H1 (cell line): ENCODE measurements at regions of chr6 and their contacts with region 1.

Region 1: GRCh38 chr6:31079656-31080261 is 32.6 kb downstream of the C6orf15 start:
- DNase-seq: peak; percentile 29 to 84
- H3K4me3 ChIP-seq: no peak overlapping the region
- H3K27ac ChIP-seq: no peak overlapping the region
- H3K4me1 ChIP-seq: peaks cover 0 to 4% (median 3%) of the 10 kb centered on the region in 4 experiments; a peak in 6 of 7 replicates
- H3K27me3 ChIP-seq: no peaks in the 10 kb centered on the region
- CTCF ChIP-seq: peak; percentile 27 to 83 (median 76)
- EP300 ChIP-seq: peak in 1 of 2 experiments; percentile 28; a peak in 1 of 3 replicates
- POLR2A ChIP-seq: no peak
- RAD21 ChIP-seq: peak; percentile 79 to 88

Region 2: GRCh38 chr6:30828027-30828960 is 251.5 kb before region 1 on chr6:
- CTCF ChIA-PET with region 1: interaction called, 18 read pairs
- POLR2A ChIA-PET with region 1: no interaction called
- DNase-seq: peak in 1 of 2 experiments; percentile 93
- H3K4me3 ChIP-seq: no peak overlapping the region
- H3K27ac ChIP-seq: no peak overlapping the region
- H3K4me1 ChIP-seq: peaks cover 0 to 11% (median 3%) of the 10 kb centered on the region in 4 experiments; a peak in 4 of 7 replicates
- H3K27me3 ChIP-seq: no peaks in the 10 kb centered on the region
- CTCF ChIP-seq: peak; percentile 92 to 95 (median 94)
- EP300 ChIP-seq: no peak
- POLR2A ChIP-seq: peak in 1 of 2 experiments; percentile 34; a peak in 1 of 3 replicates
- RAD21 ChIP-seq: peak; percentile 97

Region 3: DNA sequence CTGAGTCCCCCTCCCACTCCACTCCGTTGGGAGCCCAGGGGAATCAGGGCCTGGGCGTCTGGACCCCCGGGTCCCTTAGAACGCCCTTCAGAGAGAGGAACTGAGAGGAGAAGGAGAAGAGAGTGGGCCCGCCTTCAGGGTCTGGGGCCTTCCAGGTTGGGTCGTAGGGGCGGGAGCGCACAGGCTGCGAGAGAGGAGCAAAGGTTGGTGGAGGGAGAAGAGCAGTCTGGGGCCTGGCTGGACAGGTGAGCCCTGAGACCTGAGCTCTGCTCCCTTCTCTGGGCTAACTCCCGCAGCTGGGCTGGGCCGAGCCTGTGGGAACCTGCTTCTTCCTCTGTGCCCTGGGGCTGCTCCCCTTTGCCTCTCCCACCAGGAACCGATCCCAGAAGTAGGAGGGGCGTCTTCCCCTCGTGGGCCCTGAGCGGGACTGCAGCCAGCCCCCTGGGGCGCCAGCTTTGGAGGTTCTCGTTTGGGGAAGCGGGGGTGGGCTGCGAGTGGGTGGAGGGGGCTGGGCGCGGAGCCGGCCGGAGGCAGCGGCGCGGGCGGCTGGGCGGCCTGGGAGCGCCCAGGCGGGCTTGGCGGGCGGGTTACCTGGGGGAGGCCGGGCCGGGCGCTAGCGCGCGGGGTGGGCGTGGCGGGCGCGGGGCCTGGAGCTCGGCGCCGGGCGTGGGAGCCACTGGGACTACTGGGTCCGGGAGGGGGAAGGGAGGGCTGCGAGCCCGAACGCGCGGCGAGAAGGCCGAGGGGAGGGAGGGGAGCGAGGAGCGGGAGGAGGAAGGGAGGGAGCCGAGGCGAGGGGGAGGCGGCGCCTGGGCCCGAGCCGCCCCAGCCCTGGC is 195.9 kb before region 1 on chr6 and contains the start of gene DDR1:
- CTCF ChIA-PET with region 1: interaction called, 13 read pairs
- POLR2A ChIA-PET with region 1: no interaction called
- DNase-seq: peak in 1 of 2 experiments; percentile 76
- H3K4me3 ChIP-seq: peak within 1 kb of the TSS; percentile 57 to 86 (median 80)
- H3K27ac ChIP-seq: peak within 1 kb of the TSS; percentile 86
- H3K4me1 ChIP-seq: peaks cover 12 to 52% (median 37%) of the 10 kb centered on the region in 4 experiments
- H3K27me3 ChIP-seq: no peaks in the 10 kb centered on the region
- CTCF ChIP-seq: no peak
- EP300 ChIP-seq: no peak
- POLR2A ChIP-seq: no peak
- RAD21 ChIP-seq: no peak
- total RNA-seq, gene DDR1: 181 and 182 TPM in 2 replicates

Region 4: DNA sequence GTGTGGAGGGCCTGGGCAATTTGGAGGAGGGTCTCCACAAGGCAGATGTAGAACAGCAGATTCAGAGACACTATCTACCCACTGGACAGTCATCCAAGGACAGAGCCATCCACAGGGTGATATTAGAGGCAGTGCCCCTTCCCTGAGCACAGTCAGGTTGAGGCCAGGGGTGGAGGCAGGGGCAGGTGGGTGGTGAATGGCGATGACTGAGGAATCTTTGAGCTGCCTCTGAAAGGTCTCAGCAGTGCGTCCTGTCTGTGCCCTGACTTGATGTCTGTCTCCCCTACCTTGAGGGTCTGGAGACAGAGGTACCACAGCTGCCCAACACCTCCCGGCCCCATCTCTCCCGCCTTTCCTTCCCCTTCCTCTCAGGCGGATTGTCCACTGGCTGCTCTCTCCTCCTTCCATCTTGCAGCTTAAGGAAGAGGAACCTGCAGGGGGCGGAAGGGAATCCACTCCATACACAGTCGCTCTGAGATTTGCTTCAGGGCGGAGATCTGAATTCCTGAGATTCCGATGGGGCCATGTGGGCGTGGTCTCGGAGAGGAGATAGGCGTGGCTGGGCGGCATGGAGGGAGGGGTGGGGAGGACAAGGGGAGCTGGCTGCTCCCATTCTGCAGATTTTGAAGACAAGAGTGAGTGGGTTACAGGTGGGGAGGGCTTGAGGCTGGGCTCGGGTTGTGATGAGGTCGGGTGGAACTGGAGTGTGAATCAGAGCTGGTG is 137.3 kb before region 1 on chr6:
- CTCF ChIA-PET with region 1: interaction called, 26 read pairs
- POLR2A ChIA-PET with region 1: no interaction called
- DNase-seq: peak; percentile 83 to 95
- H3K4me3 ChIP-seq: no peak overlapping the region
- H3K27ac ChIP-seq: no peak overlapping the region
- H3K4me1 ChIP-seq: peaks cover 6 to 14% (median 9%) of the 10 kb centered on the region in 4 experiments
- H3K27me3 ChIP-seq: no peaks in the 10 kb centered on the region; a peak in 1 of 7 replicates
- CTCF ChIP-seq: peak; percentile 48 to 62 (median 61)
- EP300 ChIP-seq: 0 out of 3 replicates have a peak, but pooled peaks of 1 of the 2 experiments have one; percentile 44
- POLR2A ChIP-seq: peak in 1 of 2 experiments; percentile 60; a peak in 2 of 3 replicates
- RAD21 ChIP-seq: peak; percentile 49 to 58

Region 5: DNA sequence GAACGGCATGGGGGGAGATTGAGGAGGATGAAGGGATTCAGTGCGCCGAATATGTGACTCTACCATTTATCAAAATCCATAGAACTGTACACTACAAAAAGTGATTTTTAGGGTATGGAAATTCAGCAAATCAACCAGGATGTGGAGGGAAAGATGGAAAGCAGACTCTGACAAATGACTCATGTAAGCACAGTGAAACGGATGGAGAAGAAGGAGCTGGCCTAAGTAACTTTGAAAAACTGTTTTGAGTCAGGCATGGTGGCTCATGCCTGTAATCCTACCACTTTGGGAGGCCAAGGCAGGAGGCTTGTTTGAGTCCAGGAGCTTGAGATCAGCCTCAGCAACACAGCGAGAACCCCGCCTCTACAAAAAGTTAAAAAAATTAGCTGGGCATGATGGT is 30.2 kb before region 1 on chr6:
- CTCF ChIA-PET with region 1: interaction called, 32 read pairs
- POLR2A ChIA-PET with region 1: no interaction called
- DNase-seq: no peak
- H3K4me3 ChIP-seq: no peak overlapping the region
- H3K27ac ChIP-seq: no peak overlapping the region
- H3K4me1 ChIP-seq: no peaks in the 10 kb centered on the region
- H3K27me3 ChIP-seq: no peaks in the 10 kb centered on the region; a peak in 1 of 7 replicates
- CTCF ChIP-seq: no peak
- EP300 ChIP-seq: no peak
- POLR2A ChIP-seq: no peak
- RAD21 ChIP-seq: no peak

Region 6: GRCh38 chr6:31068669-31069340 is 11.0 kb before region 1 on chr6:
- CTCF ChIA-PET with region 1: interaction called, 38 read pairs
- POLR2A ChIA-PET with region 1: interaction called, 4 read pairs
- DNase-seq: peak; percentile 36 to 90
- H3K4me3 ChIP-seq: no peak overlapping the region
- H3K27ac ChIP-seq: no peak overlapping the region; the same call in 1 of the 2 replicates
- H3K4me1 ChIP-seq: peaks cover 3 to 15% (median 7%) of the 10 kb centered on the region in 4 experiments; a peak in 6 of 7 replicates
- H3K27me3 ChIP-seq: no peaks in the 10 kb centered on the region
- CTCF ChIP-seq: peak; percentile 83 to 98 (median 96)
- EP300 ChIP-seq: no peak
- POLR2A ChIP-seq: no peak
- RAD21 ChIP-seq: peak; percentile 75 to 76

Region 7: GRCh38 chr6:31128093-31128676 is 48.4 kb after region 1 on chr6:
- CTCF ChIA-PET with region 1: interaction called, 48 read pairs
- POLR2A ChIA-PET with region 1: no interaction called
- DNase-seq: peak in 1 of 2 experiments; percentile 95
- H3K4me3 ChIP-seq: no peak overlapping the region
- H3K27ac ChIP-seq: no peak overlapping the region
- H3K4me1 ChIP-seq: peaks cover 0 to 3% (median 3%) of the 10 kb centered on the region in 4 experiments; a peak in 3 of 7 replicates
- H3K27me3 ChIP-seq: no peaks in the 10 kb centered on the region; a peak in 1 of 7 replicates
- CTCF ChIP-seq: peak; percentile 60 to 86 (median 83)
- EP300 ChIP-seq: no peak
- POLR2A ChIP-seq: no peak
- RAD21 ChIP-seq: peak; percentile 53 to 70

Region 8: GRCh38 chr6:31332637-31333602 is 253.2 kb after region 1 on chr6:
- CTCF ChIA-PET with region 1: no interaction called
- POLR2A ChIA-PET with region 1: no interaction called
- DNase-seq: no peak
- H3K4me3 ChIP-seq: no peak overlapping the region
- H3K27ac ChIP-seq: no peak overlapping the region
- H3K4me1 ChIP-seq: no peaks in the 10 kb centered on the region
- H3K27me3 ChIP-seq: no peaks in the 10 kb centered on the region
- CTCF ChIP-seq: no peak
- EP300 ChIP-seq: no peak
- POLR2A ChIP-seq: no peak
- RAD21 ChIP-seq: no peak